Activated naive CD4-positive, alpha-beta T cell treated with anti-CD3 and anti-CD28 coated beads for 36 hours (primary cell): ENCODE measurements at regions of chr3 and their contacts with region 1.

Region 1: DNA sequence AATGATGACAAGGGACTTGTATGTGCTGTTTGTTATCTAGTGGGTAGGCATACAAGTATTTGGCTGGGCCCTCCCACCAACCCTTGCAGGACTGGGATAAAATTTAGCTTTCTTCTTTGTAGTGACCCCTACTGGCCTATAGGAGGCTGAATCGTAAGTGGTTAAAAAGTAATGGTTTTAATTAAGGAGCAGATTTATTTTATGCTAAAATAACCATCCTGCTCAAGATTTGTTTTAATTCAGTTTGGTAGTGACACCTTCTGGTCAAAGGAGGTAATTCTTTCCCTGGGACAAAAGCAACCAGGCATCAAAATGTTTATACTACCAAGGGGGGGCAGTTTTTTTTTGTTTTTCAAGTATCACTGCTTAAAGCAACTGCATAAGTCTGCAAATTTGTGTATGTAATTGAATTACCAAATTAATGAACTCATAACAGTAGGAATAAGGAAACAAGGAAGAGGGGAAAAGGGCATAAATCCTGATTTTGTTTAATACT is 70.7 kb downstream of the TOP2B start:
- DNase-seq: no peak
- H3K4me3 Mint-ChIP-seq: no peak overlapping the region
- H3K27ac Mint-ChIP-seq: no peak overlapping the region
- H3K4me1 Mint-ChIP-seq: peaks cover 1% of the 10 kb centered on the region
- H3K27me3 Mint-ChIP-seq: no peaks in the 10 kb centered on the region

Region 2: DNA sequence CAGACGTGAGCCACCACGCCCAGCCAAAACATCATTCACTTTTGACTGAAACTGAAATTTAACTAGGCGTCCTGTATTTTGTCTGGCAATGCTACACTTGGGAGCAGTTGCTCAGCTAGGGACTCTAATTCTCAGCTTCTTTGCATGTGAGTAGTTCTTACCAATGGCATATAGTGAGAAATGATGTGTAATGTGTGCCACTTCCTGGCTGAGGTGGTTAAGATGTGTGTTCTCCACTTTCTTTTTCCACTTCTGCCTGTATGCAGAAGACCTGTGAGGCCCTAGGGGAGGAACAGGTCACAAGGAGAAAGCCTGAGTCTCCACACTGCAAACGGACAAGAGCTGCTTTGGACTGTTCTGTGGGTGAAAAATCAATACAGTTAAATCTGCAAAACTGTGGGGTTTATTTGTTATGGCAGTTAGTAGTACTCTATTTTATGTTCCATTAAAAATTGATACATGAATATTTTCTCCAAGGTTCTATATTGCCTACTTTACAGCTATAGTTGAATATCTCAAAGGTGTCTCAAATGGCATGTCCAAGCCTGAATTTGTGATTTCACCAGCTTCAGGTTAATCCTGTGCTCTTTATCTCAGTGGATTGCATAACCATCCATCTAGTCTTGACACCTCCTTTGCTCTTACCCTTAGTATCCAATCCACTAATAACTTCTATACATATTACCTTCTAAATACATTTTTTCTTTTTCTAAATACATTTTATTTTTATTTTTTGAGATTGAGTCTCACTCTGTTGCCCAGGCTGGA is 1589.7 kb before region 1 on chr3:
- CTCF ChIA-PET with region 1: no interaction called
- intact Hi-C with region 1: loop called (anchors 5 kb)
- DNase-seq: peak; percentile 58
- H3K4me3 Mint-ChIP-seq: no peak overlapping the region
- H3K27ac Mint-ChIP-seq: peak overlapping the region; percentile 28
- H3K4me1 Mint-ChIP-seq: peaks cover 11% of the 10 kb centered on the region
- H3K27me3 Mint-ChIP-seq: peaks cover 4% of the 10 kb centered on the region

Region 3: GRCh38 chr3:24680214-24680967 is 913.7 kb before region 1 on chr3:
- CTCF ChIA-PET with region 1: interaction called, 6 read pairs
- intact Hi-C with region 1: loop called (anchors 1 kb)
- DNase-seq: peak; percentile 73
- H3K4me3 Mint-ChIP-seq: no peak overlapping the region
- H3K27ac Mint-ChIP-seq: no peak overlapping the region
- H3K4me1 Mint-ChIP-seq: peaks cover 6% of the 10 kb centered on the region
- H3K27me3 Mint-ChIP-seq: peaks cover 34% of the 10 kb centered on the region

Region 4: GRCh38 chr3:24773798-24774197 is 820.3 kb before region 1 on chr3:
- CTCF ChIA-PET with region 1: no interaction called
- intact Hi-C with region 1: loop called (anchors 1 kb)
- DNase-seq: peak; percentile 48
- H3K4me3 Mint-ChIP-seq: no peak overlapping the region
- H3K27ac Mint-ChIP-seq: no peak overlapping the region
- H3K4me1 Mint-ChIP-seq: no peaks in the 10 kb centered on the region
- H3K27me3 Mint-ChIP-seq: no peaks in the 10 kb centered on the region

Region 5: DNA sequence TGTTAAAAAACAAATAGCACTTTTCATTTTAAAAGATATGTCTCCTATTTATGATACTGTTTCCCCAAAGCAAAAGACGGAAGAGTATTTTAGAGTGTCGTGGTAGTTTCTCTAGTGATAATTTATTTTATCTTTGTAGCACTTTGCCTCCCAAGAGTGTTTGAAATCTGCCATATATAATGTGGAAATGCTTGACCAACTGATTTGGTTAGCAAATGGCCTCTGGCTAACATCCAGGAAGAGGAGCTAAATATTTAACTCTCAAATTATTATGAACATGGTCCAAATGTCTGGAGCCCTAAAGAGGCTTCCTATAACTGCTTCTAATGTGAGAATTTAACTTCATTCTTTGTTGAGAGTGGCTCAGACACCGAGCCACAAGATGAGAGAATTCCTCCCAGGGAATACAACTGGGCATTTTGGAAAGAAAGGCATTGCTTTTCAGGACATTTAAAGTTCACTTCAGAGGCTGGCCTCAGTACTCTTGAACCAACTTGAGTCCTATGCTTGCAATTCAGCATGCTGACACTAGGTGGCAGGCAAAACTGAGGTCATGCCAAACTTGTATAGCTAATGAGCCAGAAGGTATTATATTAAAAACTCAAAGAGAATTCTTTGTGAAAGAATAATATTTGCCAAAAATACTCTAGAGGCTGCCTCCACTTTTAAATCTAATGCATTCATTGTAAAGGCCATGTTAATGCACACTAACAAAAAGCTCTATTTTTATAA is 61.5 kb before region 1 on chr3:
- CTCF ChIA-PET with region 1: interaction called, 11 read pairs
- intact Hi-C with region 1: loop called (anchors 1 kb)
- DNase-seq: peak; percentile 63
- H3K4me3 Mint-ChIP-seq: no peak overlapping the region
- H3K27ac Mint-ChIP-seq: no peak overlapping the region
- H3K4me1 Mint-ChIP-seq: no peaks in the 10 kb centered on the region
- H3K27me3 Mint-ChIP-seq: peaks cover 7% of the 10 kb centered on the region

Region 6: GRCh38 chr3:25618028-25618427 is 24.0 kb after region 1 on chr3:
- CTCF ChIA-PET with region 1: interaction called, 10 read pairs
- intact Hi-C with region 1: no loop called
- DNase-seq: no peak
- H3K4me3 Mint-ChIP-seq: no peak overlapping the region
- H3K27ac Mint-ChIP-seq: no peak overlapping the region
- H3K4me1 Mint-ChIP-seq: peaks cover 10% of the 10 kb centered on the region
- H3K27me3 Mint-ChIP-seq: no peaks in the 10 kb centered on the region